Heart left ventricle (tissue), 16 donors: ENCODE measurements at regions of chr13 and their contacts with region 1.

Region 1: GRCh38 chr13:34037636-34038540 is 219.9 kb downstream of the RFC3 start:
- DNase-seq: no peak
- ATAC-seq: no peak
- H3K4me3 ChIP-seq: no peak overlapping the region
- H3K27ac ChIP-seq: no peak overlapping the region
- H3K4me1 ChIP-seq: no peaks in the 10 kb centered on the region
- H3K27me3 ChIP-seq: no peaks in the 10 kb centered on the region
- CTCF ChIP-seq: no peak
- POLR2A ChIP-seq: no peak

Region 2: GRCh38 chr13:33970746-33971561 is 66.9 kb before region 1 on chr13:
- intact Hi-C with region 1: loop called in 2 of 10 experiments (anchors 5 to 10 kb)
- DNase-seq: no peak
- ATAC-seq: peak in 1 of 4 donors; percentile 41
- H3K4me3 ChIP-seq: no peak overlapping the region
- H3K27ac ChIP-seq: peak overlapping the region in 2 of 12 donors; percentile 2 to 4
- H3K4me1 ChIP-seq: no peaks in the 10 kb centered on the region
- H3K27me3 ChIP-seq: no peaks in the 10 kb centered on the region
- CTCF ChIP-seq: no peak
- POLR2A ChIP-seq: no peak

Region 3: GRCh38 chr13:33978653-33979290 is 59.1 kb before region 1 on chr13:
- intact Hi-C with region 1: loop called in 2 of 10 experiments (anchors 5 to 10 kb)
- DNase-seq: no peak
- ATAC-seq: no peak
- H3K4me3 ChIP-seq: no peak overlapping the region
- H3K27ac ChIP-seq: no peak overlapping the region
- H3K4me1 ChIP-seq: no peaks in the 10 kb centered on the region
- H3K27me3 ChIP-seq: no peaks in the 10 kb centered on the region
- CTCF ChIP-seq: no peak
- POLR2A ChIP-seq: no peak

Region 4: DNA sequence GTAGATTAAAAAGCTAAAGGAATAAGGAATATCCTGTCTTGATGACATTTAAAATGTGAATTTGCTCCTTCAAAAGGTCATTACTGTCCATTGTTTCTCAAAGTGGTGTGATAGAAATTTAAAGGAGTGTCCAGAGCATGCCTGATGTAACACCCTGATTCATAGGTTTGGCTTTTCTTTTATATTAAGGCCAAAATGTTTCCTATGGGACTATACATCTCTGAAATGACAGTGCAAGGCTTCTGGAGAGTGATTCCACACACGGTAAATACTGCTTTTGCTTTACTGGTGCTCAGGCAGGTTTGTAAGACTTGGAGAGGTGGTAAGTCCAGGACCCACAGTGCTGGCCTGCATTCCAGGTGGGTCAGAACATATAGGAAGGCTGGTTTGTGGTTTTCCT is 69.9 kb after region 1 on chr13:
- intact Hi-C with region 1: no loop called
- DNase-seq: no peak
- ATAC-seq: no peak
- H3K4me3 ChIP-seq: no peak overlapping the region
- H3K27ac ChIP-seq: no peak overlapping the region
- H3K4me1 ChIP-seq: no peaks in the 10 kb centered on the region
- H3K27me3 ChIP-seq: no peaks in the 10 kb centered on the region
- CTCF ChIP-seq: no peak
- POLR2A ChIP-seq: no peak